H1 (cell line): ENCODE measurements at regions of chr21 and their contacts with region 1.

Region 1: GRCh38 chr21:45596704-45597318 is 46.7 kb upstream of the PCBP3 start:
- DNase-seq: peak; percentile 41 to 93
- H3K4me3 ChIP-seq: no peak overlapping the region
- H3K27ac ChIP-seq: no peak overlapping the region
- H3K4me1 ChIP-seq: no peaks in the 10 kb centered on the region
- H3K27me3 ChIP-seq: peaks cover 0 to 6% (median 0%) of the 10 kb centered on the region in 4 experiments; a peak in 2 of 7 replicates
- CTCF ChIP-seq: peak; percentile 94 to 99 (median 96)
- EP300 ChIP-seq: no peak
- POLR2A ChIP-seq: no peak
- RAD21 ChIP-seq: peak; percentile 70 to 77

Region 2: DNA sequence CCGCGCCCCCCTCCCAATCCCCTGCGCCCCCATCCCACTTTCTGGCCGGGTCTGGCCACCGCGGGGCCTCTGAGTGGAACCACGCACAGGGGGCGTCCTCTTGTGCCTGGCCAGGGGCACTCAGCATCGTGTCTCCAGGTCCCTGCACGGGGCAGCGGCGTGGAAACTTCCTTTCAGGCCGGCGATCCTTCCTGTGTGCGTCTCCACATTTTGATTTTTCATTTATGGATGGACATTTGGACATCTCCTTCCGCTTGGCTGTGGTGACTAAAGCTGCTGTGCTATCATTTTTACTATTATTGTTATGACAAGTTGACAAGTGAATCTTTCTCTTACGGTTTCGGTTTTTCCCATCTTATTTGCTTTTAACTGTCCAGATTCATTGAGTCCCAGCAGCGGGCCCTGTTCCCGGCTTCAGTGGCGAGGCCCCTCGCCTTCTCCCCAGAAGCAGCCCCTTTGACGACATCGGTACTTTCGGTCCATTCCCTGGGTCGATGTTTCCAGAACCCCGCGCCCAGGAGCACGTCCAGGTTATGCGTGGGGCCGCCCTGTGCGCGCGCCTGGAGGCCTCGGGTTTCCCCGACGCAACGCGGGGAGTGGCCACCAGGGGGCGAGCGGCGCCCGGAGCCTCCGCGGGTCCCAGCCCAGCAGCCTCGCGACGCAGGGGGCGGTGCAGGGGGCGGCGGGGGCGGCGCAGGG is 42.2 kb before region 1 on chr21:
- CTCF ChIA-PET with region 1: interaction called, 37 read pairs
- POLR2A ChIA-PET with region 1: interaction called, 3 read pairs
- DNase-seq: peak in 1 of 2 experiments; percentile 94
- H3K4me3 ChIP-seq: peak overlapping the region; percentile 15 to 62 (median 48); a peak in 7 of 8 replicates
- H3K27ac ChIP-seq: no peak overlapping the region
- H3K4me1 ChIP-seq: peaks cover 0 to 9% (median 1%) of the 10 kb centered on the region in 4 experiments; a peak in 4 of 7 replicates
- H3K27me3 ChIP-seq: no peaks in the 10 kb centered on the region; a peak in 1 of 7 replicates
- CTCF ChIP-seq: peak in 2 of 3 experiments; percentile 72 to 75; a peak in 3 of 4 replicates
- EP300 ChIP-seq: no peak
- POLR2A ChIP-seq: no peak
- RAD21 ChIP-seq: peak; percentile 55 to 67

Region 3: DNA sequence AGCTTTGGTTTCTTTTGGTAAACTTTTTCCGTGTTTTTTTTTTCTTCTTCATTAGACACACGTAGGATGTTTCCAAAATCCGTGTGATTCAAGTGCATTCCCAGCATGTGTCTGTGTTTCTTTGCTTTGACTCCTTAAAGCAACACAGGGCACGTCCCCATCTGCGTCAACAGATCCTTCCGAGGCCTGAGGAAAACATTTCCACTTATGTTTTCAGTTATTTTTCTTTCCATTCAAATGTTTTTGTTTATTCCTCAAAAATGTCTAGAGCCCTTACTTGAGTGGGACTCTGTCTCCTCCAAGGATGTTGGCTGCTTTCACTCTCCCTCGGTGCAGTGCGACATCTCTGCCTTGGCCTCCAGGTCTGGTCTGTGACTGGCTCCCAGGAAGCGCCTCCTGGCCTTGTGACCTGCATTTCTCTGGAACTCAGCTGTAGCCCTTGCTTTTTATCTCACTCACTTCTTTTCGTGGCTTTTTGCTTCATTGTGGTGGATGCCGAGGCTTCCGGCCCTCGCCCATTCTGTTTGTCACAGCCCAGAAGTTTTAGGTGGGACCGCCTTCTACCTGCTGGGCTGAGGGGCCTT is 23.3 kb before region 1 on chr21:
- CTCF ChIA-PET with region 1: interaction called, 15 read pairs
- POLR2A ChIA-PET with region 1: no interaction called
- DNase-seq: no peak
- H3K4me3 ChIP-seq: no peak overlapping the region
- H3K27ac ChIP-seq: no peak overlapping the region
- H3K4me1 ChIP-seq: peaks cover 0 to 8% (median 5%) of the 10 kb centered on the region in 4 experiments; a peak in 3 of 7 replicates
- H3K27me3 ChIP-seq: no peaks in the 10 kb centered on the region; a peak in 1 of 7 replicates
- CTCF ChIP-seq: no peak
- EP300 ChIP-seq: no peak
- POLR2A ChIP-seq: no peak
- RAD21 ChIP-seq: no peak

Region 4: DNA sequence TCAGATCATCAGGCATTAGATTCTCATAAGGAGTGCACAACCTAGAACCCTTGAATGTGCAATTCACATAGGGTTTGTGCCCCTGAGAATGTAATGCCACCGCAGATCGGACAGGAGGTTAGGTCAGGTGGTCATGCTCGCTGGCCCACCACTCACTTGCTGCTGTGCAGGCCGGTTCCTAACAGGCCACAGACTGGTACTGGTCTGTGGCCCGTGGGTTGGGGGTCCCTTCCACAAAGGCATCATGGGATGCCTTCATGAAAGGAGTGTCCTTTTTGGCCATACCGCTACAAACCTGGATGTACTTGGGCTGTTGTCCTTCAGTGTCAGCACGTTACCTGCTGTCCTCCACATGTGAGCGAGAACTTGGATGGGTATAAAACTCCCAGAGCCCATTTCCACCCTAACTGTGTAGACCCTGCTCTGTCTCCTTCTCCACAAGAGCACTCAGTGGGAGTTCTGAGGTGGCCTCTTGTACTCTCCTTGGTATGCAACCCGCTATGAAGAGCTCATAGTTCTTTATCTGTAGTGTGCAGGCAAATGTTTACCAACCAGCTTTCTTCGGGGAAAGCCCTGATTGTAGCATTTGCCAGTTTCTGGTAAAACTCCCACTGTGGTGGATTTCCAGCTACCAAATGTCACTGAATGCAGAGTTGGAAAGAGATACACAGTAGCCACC is 12.8 kb before region 1 on chr21:
- CTCF ChIA-PET with region 1: interaction called, 11 read pairs
- POLR2A ChIA-PET with region 1: no interaction called
- DNase-seq: no peak
- H3K4me3 ChIP-seq: no peak overlapping the region
- H3K27ac ChIP-seq: no peak overlapping the region
- H3K4me1 ChIP-seq: peaks cover 0 to 6% (median 0%) of the 10 kb centered on the region in 4 experiments; a peak in 2 of 7 replicates
- H3K27me3 ChIP-seq: peaks cover 0 to 6% (median 1%) of the 10 kb centered on the region in 4 experiments; a peak in 5 of 7 replicates
- CTCF ChIP-seq: no peak
- EP300 ChIP-seq: no peak
- POLR2A ChIP-seq: no peak
- RAD21 ChIP-seq: no peak

Region 5: DNA sequence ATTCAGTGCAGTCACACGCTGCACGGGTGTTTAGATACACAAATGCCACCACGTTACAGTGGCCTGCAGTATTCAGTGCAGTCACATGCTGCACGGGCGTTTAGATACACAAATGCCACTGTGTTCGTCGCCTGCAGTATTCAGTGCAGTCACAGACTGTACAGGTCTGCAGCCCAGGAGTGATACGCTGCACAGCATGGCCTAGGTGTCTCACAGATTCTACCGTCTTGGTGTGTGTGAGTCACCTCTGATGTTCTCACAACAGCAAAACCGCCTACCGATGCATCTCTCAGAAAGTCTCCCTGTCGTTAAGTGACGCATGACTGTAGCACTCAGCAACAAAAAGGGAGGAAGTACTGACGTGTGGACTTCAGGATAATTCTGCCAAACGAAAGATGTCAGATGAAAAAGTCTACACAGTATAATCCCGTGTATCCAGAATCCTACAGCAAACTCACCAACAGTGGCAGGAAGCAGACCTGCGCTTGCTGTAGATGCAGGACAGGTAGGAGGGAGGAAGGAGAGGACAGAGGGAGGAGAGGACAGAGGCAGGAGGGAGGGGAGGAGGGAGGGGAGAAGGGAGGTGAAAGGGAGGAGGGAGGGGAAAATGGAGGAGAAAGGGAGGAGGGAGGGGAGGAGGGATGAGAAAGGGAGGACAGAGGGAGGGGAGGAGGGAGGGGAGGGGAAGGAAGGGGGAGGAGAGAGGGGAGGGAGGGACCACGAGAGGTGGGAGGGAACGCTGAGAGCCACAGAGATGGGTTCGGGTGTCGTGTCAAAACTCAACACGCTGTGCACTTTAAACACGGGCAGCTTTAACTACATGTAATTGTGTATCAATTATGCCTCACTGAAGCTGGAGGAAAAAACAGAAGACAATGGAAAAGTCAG is 10.5 kb after region 1 on chr21:
- CTCF ChIA-PET with region 1: interaction called, 11 read pairs
- POLR2A ChIA-PET with region 1: no interaction called
- DNase-seq: no peak
- H3K4me3 ChIP-seq: no peak overlapping the region
- H3K27ac ChIP-seq: no peak overlapping the region
- H3K4me1 ChIP-seq: no peaks in the 10 kb centered on the region
- H3K27me3 ChIP-seq: no peaks in the 10 kb centered on the region; a peak in 1 of 7 replicates
- CTCF ChIP-seq: no peak
- EP300 ChIP-seq: no peak
- POLR2A ChIP-seq: no peak
- RAD21 ChIP-seq: no peak